ENCODE measurements at regions of chr17 and their contacts with region 1.

Region 1: DNA sequence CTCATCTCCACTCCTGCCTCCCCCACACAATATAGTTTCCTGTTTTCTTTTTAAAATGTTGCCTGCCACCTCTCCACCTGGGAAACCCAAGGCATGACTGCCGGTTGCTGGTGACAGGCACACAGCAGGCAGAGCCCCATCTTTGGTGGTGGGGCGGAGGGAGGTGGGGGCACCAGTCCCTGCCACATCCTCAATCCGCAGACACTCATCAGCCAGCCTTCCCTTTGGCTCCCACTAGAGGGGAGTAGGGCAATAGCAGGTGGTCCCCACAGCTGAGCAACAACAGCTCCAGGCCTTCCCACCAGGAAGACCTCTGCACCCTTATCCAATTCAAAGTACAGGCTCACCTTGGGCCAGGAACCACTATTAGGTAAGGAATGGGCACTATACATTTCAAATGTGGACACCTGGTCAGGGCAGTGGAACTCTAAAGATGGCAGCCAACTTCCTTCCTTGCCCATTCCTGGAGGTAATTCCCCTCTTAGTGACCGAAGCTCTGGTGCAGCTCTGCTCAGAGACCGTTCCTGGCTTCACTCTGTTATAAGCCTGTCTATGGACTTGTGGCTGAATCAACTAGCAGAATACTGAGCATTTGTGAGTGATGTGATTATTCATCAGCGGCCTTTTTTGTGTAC is 13.9 kb downstream of the RECQL5 start:
- DNase-seq: peak; percentile 56
- H3K4me3 ChIP-seq: no peak overlapping the region
- H3K27ac ChIP-seq: no peak overlapping the region
- H3K4me1 ChIP-seq: peaks cover 8% of the 10 kb centered on the region
- H3K27me3 ChIP-seq: no peaks in the 10 kb centered on the region
- CTCF ChIP-seq: peak; percentile 77 to 86
- POLR2A ChIP-seq: no peak

Region 2: DNA sequence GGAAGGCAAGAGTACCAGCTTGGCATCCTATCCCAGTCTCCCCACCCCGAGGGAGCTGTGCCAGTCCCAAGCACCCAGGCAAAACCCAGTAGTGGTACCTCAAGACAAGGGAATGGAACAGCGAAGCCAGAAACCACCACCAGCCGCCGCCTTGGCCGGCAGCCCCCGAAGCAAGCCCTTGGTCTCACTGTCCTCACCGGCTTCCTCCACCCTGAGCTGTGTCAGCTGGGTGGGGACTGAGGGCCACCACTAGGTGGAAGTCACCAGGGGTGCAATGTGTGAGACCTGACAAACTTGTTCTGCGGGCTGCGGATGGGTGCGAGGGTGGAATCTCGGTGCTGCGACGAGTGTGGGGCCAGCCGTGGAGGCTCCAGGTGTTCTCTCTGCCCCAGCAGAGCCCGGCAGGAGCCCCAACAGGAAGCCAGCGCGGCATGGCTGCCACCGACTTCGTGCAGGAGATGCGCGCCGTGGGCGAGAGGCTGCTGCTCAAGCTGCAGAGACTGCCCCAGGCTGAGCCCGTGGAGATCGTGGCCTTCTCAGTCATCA is 13.2 kb before region 1 on chr17:
- CTCF ChIA-PET with region 1: interaction called, 446 read pairs
- POLR2A ChIA-PET with region 1: interaction called, 6 read pairs
- dilution Hi-C with region 1: no loop called
- intact Hi-C with region 1: no loop called
- DNase-seq: no peak
- H3K4me3 ChIP-seq: no peak overlapping the region
- H3K27ac ChIP-seq: no peak overlapping the region
- H3K4me1 ChIP-seq: no peaks in the 10 kb centered on the region
- H3K27me3 ChIP-seq: no peaks in the 10 kb centered on the region
- CTCF ChIP-seq: no peak
- POLR2A ChIP-seq: no peak

Region 3: DNA sequence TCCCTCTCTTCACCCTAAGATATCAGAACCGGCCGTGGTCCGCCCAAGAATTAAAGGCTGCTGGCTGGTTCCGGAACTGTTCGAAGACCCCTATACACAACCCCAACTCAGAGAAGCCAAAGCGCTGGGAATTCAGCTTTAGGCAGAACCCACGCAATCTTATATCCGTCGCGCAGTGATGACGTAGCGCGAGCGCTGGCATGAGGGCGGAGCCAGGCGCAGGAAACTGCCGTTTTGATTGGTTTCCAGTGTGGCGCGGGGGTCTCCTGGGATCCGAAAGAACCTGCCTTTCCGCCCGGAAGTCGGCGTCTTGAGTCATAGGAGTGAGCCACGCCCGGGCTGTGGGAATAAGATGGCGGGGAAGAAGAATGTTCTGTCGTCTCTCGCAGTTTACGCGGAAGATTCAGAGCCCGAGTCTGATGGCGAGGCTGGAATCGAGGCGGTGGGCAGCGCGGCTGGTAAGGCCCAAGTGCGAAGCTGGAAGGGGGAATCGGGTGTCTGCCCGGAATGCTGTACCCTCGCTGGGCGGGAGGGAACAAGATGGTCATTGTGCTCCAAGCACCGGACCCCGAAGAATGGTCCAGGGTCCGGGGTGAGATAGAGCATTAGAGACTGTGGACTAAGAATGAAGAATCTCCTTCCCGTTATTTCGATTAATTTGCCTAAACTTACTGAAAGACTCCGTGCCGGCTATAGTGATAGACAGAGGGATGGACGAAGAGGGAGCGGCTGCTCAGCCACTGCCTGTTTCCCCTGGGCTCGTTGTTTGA is 14.2 kb after region 1 on chr17 and contains the starts of genes RECQL5 and SAP30BP:
- CTCF ChIA-PET with region 1: interaction called, 11 read pairs
- POLR2A ChIA-PET with region 1: interaction called, 3 read pairs
- dilution Hi-C with region 1: no loop called
- intact Hi-C with region 1: no loop called
- DNase-seq: peak; percentile 98
- H3K4me3 ChIP-seq: peak within 1 kb of the TSS; percentile 77 to 95 (median 81)
- H3K27ac ChIP-seq: peak within 1 kb of the TSS; percentile 86
- H3K4me1 ChIP-seq: peaks cover 20% of the 10 kb centered on the region
- H3K27me3 ChIP-seq: no peaks in the 10 kb centered on the region
- CTCF ChIP-seq: no peak
- POLR2A ChIP-seq: peak; percentile 31
- total RNA-seq, gene RECQL5: 30.7 and 30.9 TPM in 2 replicates
- total RNA-seq, gene SAP30BP: 143 and 151 TPM in 2 replicates

Region 4: GRCh38 chr17:75712446-75712845 is 59.4 kb after region 1 on chr17:
- CTCF ChIA-PET with region 1: no interaction called
- POLR2A ChIA-PET with region 1: no interaction called
- dilution Hi-C with region 1: no loop called
- intact Hi-C with region 1: no loop called
- DNase-seq: no peak
- H3K4me3 ChIP-seq: no peak overlapping the region
- H3K27ac ChIP-seq: no peak overlapping the region
- H3K4me1 ChIP-seq: peaks cover 6% of the 10 kb centered on the region
- H3K27me3 ChIP-seq: no peaks in the 10 kb centered on the region
- CTCF ChIP-seq: no peak
- POLR2A ChIP-seq: no peak

Region 5: DNA sequence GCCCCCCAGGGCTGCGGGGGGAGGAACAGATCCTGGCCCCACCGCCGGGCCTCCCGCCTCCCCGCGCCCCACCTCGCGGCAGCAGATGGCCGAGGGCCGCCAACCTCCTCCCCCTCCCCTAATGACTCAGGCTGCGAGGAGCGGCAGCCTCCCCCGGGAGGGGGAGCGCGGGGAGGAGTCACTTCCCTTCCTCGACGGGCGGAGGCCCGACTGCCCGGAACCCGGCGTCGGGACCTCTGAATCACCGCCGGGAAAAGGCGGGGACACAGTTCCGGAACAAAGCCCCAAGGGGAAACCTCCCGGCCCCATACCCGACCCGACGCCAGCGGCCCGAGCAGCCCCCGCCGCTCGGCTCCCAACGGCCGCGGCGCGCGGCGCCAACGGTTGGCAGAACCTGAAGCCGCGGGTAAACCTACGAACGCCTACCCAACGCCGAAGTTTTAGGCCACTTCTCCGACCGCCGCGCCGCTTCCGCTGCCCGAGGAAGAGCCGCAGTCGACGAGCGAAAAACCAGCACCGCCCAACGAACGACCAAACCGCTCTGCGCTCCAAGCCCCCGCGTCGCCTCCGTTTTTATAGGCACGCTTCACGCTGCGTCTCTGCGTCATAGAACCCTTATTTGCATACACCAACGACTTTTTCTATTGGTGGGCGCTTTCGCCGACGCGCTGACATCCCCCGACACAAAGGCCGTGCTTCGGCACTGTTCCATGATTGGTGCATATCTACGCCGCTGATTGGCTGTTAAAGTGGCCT is 126.4 kb after region 1 on chr17:
- CTCF ChIA-PET with region 1: no interaction called
- POLR2A ChIA-PET with region 1: no interaction called
- dilution Hi-C with region 1: no loop called
- intact Hi-C with region 1: no loop called
- DNase-seq: peak; percentile 100
- H3K4me3 ChIP-seq: peak overlapping the region; percentile 61 to 87 (median 72)
- H3K27ac ChIP-seq: peak overlapping the region; percentile 93
- H3K4me1 ChIP-seq: peaks cover 24% of the 10 kb centered on the region
- H3K27me3 ChIP-seq: no peaks in the 10 kb centered on the region
- CTCF ChIP-seq: no peak
- POLR2A ChIP-seq: peak; percentile 100

Measured in endothelial cell of umbilical vein (primary cell).